ENCODE measurements at regions of chr3 and their contacts with region 1.

Region 1: DNA sequence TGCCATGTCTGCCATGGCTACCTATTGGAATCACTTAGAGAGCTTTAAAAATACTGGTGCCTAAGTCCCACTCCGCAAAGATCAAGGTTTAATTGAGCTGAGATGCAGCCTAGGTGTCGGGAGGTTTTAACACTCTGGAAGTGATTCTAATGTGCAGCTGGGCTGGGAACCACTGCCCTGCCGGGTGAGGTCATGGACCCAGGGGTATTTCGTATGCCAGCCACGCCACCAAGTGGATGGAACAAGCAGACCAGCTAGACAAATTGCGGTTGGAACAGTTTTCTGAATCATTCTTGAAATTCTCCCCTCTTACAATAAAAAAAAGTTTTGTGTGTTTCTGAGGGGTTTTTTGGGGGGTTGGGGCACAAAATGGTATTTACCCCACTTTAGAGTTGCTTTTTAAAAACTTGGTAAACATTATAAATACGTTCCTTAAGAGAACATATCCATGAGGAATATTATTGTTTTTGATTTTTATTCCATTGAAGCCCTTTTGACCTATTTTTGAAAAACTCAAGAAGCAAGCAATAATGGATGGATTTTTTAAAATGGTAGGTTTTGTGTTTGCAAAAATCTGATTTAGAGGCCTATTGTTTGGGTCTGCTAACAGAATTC is 66.2 kb upstream of the CSTA start:
- DNase-seq: peak; percentile 50 to 77 (median 67)
- ATAC-seq: peak; percentile 67 to 94 (median 90)
- H3K4me3 ChIP-seq: no peak overlapping the region
- H3K27ac ChIP-seq: no peak overlapping the region
- H3K4me1 ChIP-seq: peaks cover 0 to 32% (median 4%) of the 10 kb centered on the region in 12 donors
- H3K27me3 ChIP-seq: no peaks in the 10 kb centered on the region
- CTCF ChIP-seq: peak; percentile 32 to 67 (median 54)
- POLR2A ChIP-seq: no peak

Region 2: GRCh38 chr3:121995161-121996137 is 263.4 kb before region 1 on chr3:
- intact Hi-C with region 1: loop called in 1 of 10 experiments (anchors 10 kb)
- DNase-seq: peak; percentile 47 to 72 (median 52)
- ATAC-seq: peak; percentile 47 to 83 (median 77)
- H3K4me3 ChIP-seq: no peak overlapping the region
- H3K27ac ChIP-seq: peak overlapping the region in 4 of 12 donors; percentile 19 to 89 (median 38)
- H3K4me1 ChIP-seq: peaks cover 0 to 55% (median 0%) of the 10 kb centered on the region in 12 donors
- H3K27me3 ChIP-seq: no peaks in the 10 kb centered on the region
- CTCF ChIP-seq: peak; percentile 21 to 63 (median 43)
- POLR2A ChIP-seq: no peak

Region 3: DNA sequence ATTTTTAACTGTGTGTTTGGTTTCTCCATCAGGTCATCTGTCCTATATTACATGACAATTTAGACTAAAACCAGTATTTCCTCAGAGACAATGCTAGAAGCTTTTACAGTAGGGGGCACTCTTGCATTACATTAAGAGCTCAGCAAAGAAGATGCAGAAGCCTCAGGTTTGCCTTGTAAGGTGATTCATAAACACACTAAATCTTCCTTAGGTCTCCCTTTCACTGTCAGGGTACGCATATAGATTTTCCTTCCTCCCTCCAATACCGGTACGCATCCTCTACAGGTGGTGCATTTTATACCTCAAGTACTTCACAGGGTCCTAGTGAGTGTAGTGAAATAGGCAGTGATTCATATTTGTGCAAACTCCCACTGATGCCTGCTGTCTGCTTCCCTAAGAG is 157.2 kb before region 1 on chr3:
- intact Hi-C with region 1: loop called in 6 of 10 experiments (anchors 2 to 10 kb)
- DNase-seq: no peak
- ATAC-seq: peak in 1 of 4 donors; percentile 18
- H3K4me3 ChIP-seq: no peak overlapping the region
- H3K27ac ChIP-seq: no peak overlapping the region
- H3K4me1 ChIP-seq: peaks cover 0 to 6% (median 0%) of the 10 kb centered on the region in 12 donors
- H3K27me3 ChIP-seq: peaks cover 0 to 9% (median 0%) of the 10 kb centered on the region in 9 donors
- CTCF ChIP-seq: peak in 8 of 12 donors; percentile 11 to 50 (median 38)
- POLR2A ChIP-seq: no peak

Measured in heart left ventricle (tissue), 16 donors.